WTC11 (cell line): ENCODE measurements at regions of chr3 and their contacts with region 1.

Region 1: DNA sequence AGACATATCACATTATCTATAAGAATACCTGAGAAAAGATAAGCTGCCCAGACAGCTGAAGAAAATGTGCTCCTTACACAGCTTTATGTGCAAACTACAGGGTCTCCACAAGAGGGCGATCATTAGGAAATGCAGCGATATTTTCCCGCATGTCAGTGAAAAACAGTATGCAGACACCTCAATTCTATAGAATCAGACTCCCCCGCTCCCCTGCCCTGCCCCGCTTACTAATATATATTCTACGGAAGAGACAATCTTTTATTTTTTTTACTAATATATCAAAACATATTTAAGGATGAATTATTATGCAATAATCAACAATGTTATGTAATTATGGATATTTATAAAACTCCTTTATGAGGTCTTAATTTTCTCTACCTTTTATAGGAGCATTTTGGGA is 681.3 kb downstream of the ROBO1 start:
- DNase-seq: peak; percentile 59
- ATAC-seq: peak; percentile 65
- H3K4me3 Mint-ChIP-seq: no peak overlapping the region
- H3K27ac Mint-ChIP-seq: no peak overlapping the region
- H3K4me1 Mint-ChIP-seq: peaks cover 40% of the 10 kb centered on the region
- H3K27me3 Mint-ChIP-seq: no peaks in the 10 kb centered on the region
- CTCF ChIP-seq: peak; percentile 77

Region 2: DNA sequence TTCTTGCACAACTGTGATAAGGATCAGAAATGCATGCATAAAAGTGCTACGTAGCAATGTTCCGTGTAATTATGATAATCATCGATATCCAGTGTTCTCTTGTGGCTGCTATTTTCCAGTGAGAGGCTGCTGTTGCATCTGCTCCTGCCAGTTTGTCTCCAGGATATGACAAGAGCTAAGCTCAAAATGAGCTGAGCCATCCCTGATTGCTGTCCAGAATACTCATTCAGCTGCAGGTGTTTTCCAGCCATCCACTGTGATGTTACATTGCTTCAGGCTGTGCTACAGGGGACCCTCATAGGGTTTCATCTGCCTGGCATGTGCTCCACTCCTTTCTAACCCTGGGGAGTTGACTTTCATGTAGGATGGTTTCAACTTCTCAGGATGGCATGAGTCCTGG is 294.8 kb before region 1 on chr3:
- CTCF ChIA-PET with region 1: no interaction called
- POLR2A ChIA-PET with region 1: no interaction called
- DNase-seq: no peak
- ATAC-seq: no peak
- H3K4me3 Mint-ChIP-seq: no peak overlapping the region
- H3K27ac Mint-ChIP-seq: no peak overlapping the region
- H3K4me1 Mint-ChIP-seq: peaks cover 16% of the 10 kb centered on the region
- H3K27me3 Mint-ChIP-seq: no peaks in the 10 kb centered on the region
- CTCF ChIP-seq: no peak

Region 3: GRCh38 chr3:79027593-79027992 is 58.9 kb before region 1 on chr3:
- CTCF ChIA-PET with region 1: no interaction called
- POLR2A ChIA-PET with region 1: no interaction called
- DNase-seq: no peak
- ATAC-seq: no peak
- H3K4me3 Mint-ChIP-seq: no peak overlapping the region
- H3K27ac Mint-ChIP-seq: no peak overlapping the region
- H3K4me1 Mint-ChIP-seq: peaks cover 11% of the 10 kb centered on the region; the same call in 1 of the 2 replicates
- H3K27me3 Mint-ChIP-seq: no peaks in the 10 kb centered on the region
- CTCF ChIP-seq: no peak

Region 4: GRCh38 chr3:79066481-79066880 is 20.0 kb before region 1 on chr3:
- CTCF ChIA-PET with region 1: interaction called, 10 read pairs
- POLR2A ChIA-PET with region 1: no interaction called
- DNase-seq: no peak
- ATAC-seq: peak; percentile 48
- H3K4me3 Mint-ChIP-seq: no peak overlapping the region
- H3K27ac Mint-ChIP-seq: peak overlapping the region; percentile 57; the same call in 1 of the 2 replicates
- H3K4me1 Mint-ChIP-seq: peaks cover 37% of the 10 kb centered on the region
- H3K27me3 Mint-ChIP-seq: no peaks in the 10 kb centered on the region
- CTCF ChIP-seq: no peak

Region 5: GRCh38 chr3:79361748-79362378 is 275.3 kb after region 1 on chr3:
- CTCF ChIA-PET with region 1: interaction called, 117 read pairs
- POLR2A ChIA-PET with region 1: no interaction called
- DNase-seq: no peak
- ATAC-seq: peak; percentile 57; the same call in 1 of the 2 replicates
- H3K4me3 Mint-ChIP-seq: no peak overlapping the region
- H3K27ac Mint-ChIP-seq: no peak overlapping the region
- H3K4me1 Mint-ChIP-seq: peaks cover 25% of the 10 kb centered on the region
- H3K27me3 Mint-ChIP-seq: no peaks in the 10 kb centered on the region
- CTCF ChIP-seq: peak; percentile 51

Region 6: GRCh38 chr3:79369306-79369705 is 282.8 kb after region 1 on chr3:
- CTCF ChIA-PET with region 1: interaction called, 15 read pairs
- POLR2A ChIA-PET with region 1: no interaction called
- DNase-seq: no peak
- ATAC-seq: peak; percentile 53; the same call in 1 of the 2 replicates
- H3K4me3 Mint-ChIP-seq: no peak overlapping the region
- H3K27ac Mint-ChIP-seq: no peak overlapping the region
- H3K4me1 Mint-ChIP-seq: peaks cover 18% of the 10 kb centered on the region
- H3K27me3 Mint-ChIP-seq: no peaks in the 10 kb centered on the region
- CTCF ChIP-seq: no peak